ENCODE measurements at regions of chr7 and their contacts with region 1.

Region 1: GRCh38 chr7:121180436-121181063 is 148.2 kb upstream of the WNT16 start:
- DNase-seq: no peak
- ATAC-seq: peak; percentile 89
- H3K4me3 Mint-ChIP-seq: peak overlapping the region; percentile 29
- H3K27ac Mint-ChIP-seq: peak overlapping the region; percentile 91
- H3K4me1 Mint-ChIP-seq: peaks cover 83% of the 10 kb centered on the region
- H3K27me3 Mint-ChIP-seq: no peaks in the 10 kb centered on the region
- CTCF ChIP-seq: no peak

Region 2: DNA sequence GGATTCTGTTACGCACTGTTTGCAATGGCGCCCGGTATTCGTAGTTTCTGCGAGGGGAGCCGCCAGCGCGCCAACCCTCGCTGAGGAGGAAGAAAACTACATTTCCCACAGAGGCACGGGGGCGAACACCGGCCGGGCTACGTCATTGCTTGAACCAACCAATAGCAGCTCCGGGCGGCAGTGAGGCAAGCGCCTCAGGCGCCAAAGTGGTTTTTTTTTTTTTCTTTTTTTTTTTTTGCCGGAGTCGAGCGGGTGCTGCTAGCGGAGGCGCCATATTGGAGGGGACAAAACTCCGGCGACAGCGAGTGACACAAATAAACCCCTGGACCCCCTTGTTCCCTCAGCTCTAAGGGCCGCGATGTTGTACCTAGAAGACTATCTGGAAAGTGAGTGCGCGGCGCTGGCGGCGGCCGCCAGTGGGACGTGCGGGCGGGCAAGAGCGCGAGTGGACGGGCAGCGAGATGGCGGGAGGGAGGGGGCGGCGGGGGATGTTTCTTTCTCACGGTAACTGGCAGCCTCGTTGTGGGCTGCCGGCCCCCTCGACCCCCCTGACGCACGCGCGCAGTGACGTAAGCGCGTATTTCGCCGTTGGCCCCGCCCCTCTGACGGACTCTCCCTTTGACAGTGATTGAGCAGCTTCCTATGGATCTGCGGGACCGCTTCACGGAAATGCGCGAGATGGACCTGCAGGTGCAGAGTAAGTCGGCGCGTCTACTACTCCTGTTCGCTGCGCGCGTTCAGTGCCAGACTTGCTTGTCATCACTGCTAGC is 229.8 kb before region 1 on chr7 and contains the start of gene ING3:
- CTCF ChIA-PET with region 1: no interaction called
- POLR2A ChIA-PET with region 1: interaction called, 4 read pairs
- intact Hi-C with region 1: loop called (anchors 1 kb)
- DNase-seq: peak; percentile 99
- ATAC-seq: peak; percentile 89
- H3K4me3 Mint-ChIP-seq: peak within 1 kb of the TSS; percentile 95
- H3K27ac Mint-ChIP-seq: peak within 1 kb of the TSS; percentile 99
- H3K4me1 Mint-ChIP-seq: peaks cover 26% of the 10 kb centered on the region
- H3K27me3 Mint-ChIP-seq: peaks cover 3% of the 10 kb centered on the region
- CTCF ChIP-seq: no peak
- total RNA-seq, gene ING3: 32.7 and 36.1 TPM in 2 replicates

Region 3: GRCh38 chr7:121167971-121168370 is 12.6 kb before region 1 on chr7:
- CTCF ChIA-PET with region 1: interaction called, 3 read pairs
- POLR2A ChIA-PET with region 1: interaction called, 4 read pairs
- intact Hi-C with region 1: loop called (anchors 1 kb)
- DNase-seq: no peak
- ATAC-seq: no peak
- H3K4me3 Mint-ChIP-seq: no peak overlapping the region
- H3K27ac Mint-ChIP-seq: no peak overlapping the region
- H3K4me1 Mint-ChIP-seq: peaks cover 44% of the 10 kb centered on the region
- H3K27me3 Mint-ChIP-seq: no peaks in the 10 kb centered on the region
- CTCF ChIP-seq: no peak

Region 4: GRCh38 chr7:121204537-121204936 is 24.0 kb after region 1 on chr7:
- CTCF ChIA-PET with region 1: no interaction called
- POLR2A ChIA-PET with region 1: interaction called, 6 read pairs
- intact Hi-C with region 1: loop called (anchors 1 kb)
- DNase-seq: no peak
- ATAC-seq: no peak
- H3K4me3 Mint-ChIP-seq: no peak overlapping the region
- H3K27ac Mint-ChIP-seq: no peak overlapping the region
- H3K4me1 Mint-ChIP-seq: peaks cover 42% of the 10 kb centered on the region
- H3K27me3 Mint-ChIP-seq: no peaks in the 10 kb centered on the region
- CTCF ChIP-seq: no peak

Region 5: DNA sequence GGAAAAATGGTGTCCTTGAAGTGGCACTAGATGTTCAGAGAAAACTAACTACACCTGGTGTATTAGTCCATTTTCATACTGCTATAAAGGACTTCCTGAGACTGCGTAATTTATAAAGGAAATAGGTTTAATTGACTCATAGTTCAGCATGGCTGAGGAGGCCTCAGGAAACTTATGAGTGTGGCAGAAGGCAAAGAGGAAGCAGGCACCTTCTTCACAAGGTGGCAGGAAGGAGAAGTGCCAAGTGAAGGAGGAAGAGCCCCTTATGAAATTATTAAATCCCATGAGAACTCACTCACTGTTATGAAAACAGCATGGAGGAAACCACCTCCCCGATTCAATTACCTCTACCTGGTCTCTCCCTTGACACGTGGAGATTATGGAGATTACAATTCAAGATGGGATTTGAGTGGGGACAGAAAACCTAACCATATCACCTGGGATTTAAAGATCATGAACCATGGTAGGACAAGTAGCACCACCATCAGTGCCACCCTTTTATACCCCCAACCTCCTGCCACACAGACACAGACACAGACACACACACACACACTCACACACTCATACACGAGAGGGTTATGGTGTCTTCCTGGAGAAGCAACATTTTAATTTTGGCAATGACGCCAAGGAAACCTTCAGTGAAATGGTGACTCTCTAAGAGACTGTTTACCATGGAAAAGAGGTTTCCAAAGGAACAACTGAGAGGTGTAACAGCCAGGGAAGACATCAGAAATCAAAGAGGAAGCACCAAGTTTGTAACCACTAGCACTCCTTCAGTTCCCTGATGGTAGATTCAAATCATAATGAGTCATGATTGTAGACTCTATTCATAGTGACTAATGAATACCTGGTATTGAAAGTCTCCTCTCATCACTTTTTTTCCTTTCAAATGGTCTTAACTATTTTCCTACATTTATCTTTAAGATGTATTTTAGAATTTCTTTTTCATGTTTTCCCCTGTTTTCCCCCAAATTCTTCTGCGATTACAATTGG is 106.5 kb after region 1 on chr7:
- CTCF ChIA-PET with region 1: no interaction called
- POLR2A ChIA-PET with region 1: no interaction called
- intact Hi-C with region 1: loop called (anchors 1 kb)
- DNase-seq: no peak
- ATAC-seq: peak; percentile 87
- H3K4me3 Mint-ChIP-seq: peak overlapping the region; percentile 41
- H3K27ac Mint-ChIP-seq: peak overlapping the region; percentile 89
- H3K4me1 Mint-ChIP-seq: peaks cover 27% of the 10 kb centered on the region
- H3K27me3 Mint-ChIP-seq: no peaks in the 10 kb centered on the region
- CTCF ChIP-seq: no peak

Region 6: DNA sequence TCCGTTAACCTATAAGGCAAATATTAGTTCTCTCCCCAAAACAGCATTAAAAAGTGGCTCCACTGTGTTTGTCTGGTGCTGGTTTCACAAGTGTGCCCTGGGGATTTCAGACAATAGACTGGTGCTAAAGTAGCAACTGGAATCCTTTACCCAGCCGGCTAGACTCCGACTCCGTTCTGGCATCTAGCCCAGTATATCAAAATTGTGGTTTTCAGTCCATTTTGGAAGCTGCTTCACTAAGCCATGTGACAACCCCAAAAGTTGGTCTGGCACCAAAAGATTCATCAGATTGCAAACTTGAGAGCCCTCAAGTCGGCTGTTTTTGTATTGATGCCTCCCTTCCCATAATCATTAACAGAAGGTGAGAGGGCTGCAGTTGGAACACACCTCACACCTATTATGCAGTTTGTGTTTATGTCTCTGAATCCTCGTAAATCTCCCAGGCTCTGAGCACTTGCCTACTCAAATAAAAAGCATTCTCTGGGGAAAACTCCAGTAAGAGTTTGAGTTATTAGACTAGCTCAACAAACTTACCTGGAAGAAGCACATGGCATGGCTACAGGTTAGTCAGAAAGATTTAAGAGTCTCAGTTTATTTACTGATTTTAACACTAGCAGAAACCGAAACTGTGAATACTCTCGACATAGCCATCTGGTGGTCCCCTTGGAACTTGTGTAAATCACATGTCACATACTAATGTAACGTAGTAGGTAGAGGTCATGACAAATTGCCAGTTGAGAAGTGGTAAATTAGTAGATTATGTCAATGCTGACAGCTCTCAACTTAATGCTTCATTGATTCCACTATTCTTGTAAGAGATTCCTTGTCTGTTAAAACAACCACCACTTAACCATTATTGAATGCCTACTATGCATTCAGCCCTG is 133.5 kb after region 1 on chr7:
- CTCF ChIA-PET with region 1: no interaction called
- POLR2A ChIA-PET with region 1: no interaction called
- intact Hi-C with region 1: loop called (anchors 1 kb)
- DNase-seq: no peak
- ATAC-seq: peak; percentile 77
- H3K4me3 Mint-ChIP-seq: peak overlapping the region; percentile 44
- H3K27ac Mint-ChIP-seq: peak overlapping the region; percentile 84
- H3K4me1 Mint-ChIP-seq: peaks cover 44% of the 10 kb centered on the region
- H3K27me3 Mint-ChIP-seq: no peaks in the 10 kb centered on the region
- CTCF ChIP-seq: no peak

Region 7: DNA sequence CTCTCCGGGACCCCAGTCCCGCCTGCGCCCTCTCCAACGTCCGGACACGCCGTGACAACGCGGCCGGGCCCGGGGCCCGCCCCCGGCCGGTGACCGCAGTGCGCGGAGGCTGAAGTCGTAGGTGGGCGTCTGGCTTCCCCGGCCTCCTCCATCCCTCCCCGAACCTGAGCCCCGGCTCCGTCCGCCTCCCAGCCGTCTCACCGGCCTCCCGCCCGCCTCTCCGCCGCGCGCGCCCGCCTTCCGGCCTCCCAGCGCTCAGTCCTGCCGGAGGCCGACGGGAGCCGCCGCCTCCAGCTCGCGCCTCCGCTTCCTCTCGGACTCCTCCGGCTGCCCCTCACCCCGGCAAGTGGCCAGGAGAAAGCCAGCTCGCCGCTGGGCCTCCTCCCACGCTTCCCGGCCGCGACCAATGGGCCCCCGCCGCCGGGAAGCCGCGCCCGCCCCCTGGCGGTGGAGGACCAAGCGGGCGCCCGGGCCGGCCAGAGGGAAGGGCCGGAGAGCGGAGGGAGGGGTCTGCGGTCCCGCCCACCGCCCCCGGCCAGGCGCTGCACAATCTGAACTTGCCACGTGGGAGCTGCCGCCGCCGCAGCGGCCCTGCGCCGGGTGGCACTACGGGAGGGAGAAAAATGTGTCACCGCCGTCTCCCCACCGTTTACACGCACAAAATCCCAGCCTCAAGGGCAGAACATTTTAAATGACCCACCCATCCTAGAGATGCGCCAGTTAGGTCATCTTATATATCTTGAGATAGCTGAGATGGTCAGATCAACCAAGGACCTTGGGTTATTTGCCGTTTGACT is 215.6 kb after region 1 on chr7 and contains the start of gene FAM3C:
- CTCF ChIA-PET with region 1: interaction called, 3 read pairs
- POLR2A ChIA-PET with region 1: interaction called, 3 read pairs
- intact Hi-C with region 1: loop called (anchors 5 kb)
- DNase-seq: peak; percentile 96
- ATAC-seq: peak; percentile 88
- H3K4me3 Mint-ChIP-seq: peak within 1 kb of the TSS; percentile 91
- H3K27ac Mint-ChIP-seq: peak within 1 kb of the TSS; percentile 90
- H3K4me1 Mint-ChIP-seq: peaks cover 42% of the 10 kb centered on the region
- H3K27me3 Mint-ChIP-seq: no peaks in the 10 kb centered on the region
- CTCF ChIP-seq: no peak
- total RNA-seq, gene FAM3C: 54.8 and 59.3 TPM in 2 replicates

Region 8: GRCh38 chr7:121530227-121531174 is 350.0 kb after region 1 on chr7:
- CTCF ChIA-PET with region 1: no interaction called
- POLR2A ChIA-PET with region 1: no interaction called
- intact Hi-C with region 1: no loop called
- DNase-seq: no peak
- ATAC-seq: peak; percentile 98
- H3K4me3 Mint-ChIP-seq: no peak overlapping the region
- H3K27ac Mint-ChIP-seq: peak overlapping the region; percentile 7
- H3K4me1 Mint-ChIP-seq: peaks cover 15% of the 10 kb centered on the region
- H3K27me3 Mint-ChIP-seq: peaks cover 7% of the 10 kb centered on the region
- CTCF ChIP-seq: no peak

Measured in activated B cell treated with CpG ODN at 0.5 μM for 24 hours (primary cell).